ENCODE measurements at regions of chr17 and their contacts with region 1.

Region 1: DNA sequence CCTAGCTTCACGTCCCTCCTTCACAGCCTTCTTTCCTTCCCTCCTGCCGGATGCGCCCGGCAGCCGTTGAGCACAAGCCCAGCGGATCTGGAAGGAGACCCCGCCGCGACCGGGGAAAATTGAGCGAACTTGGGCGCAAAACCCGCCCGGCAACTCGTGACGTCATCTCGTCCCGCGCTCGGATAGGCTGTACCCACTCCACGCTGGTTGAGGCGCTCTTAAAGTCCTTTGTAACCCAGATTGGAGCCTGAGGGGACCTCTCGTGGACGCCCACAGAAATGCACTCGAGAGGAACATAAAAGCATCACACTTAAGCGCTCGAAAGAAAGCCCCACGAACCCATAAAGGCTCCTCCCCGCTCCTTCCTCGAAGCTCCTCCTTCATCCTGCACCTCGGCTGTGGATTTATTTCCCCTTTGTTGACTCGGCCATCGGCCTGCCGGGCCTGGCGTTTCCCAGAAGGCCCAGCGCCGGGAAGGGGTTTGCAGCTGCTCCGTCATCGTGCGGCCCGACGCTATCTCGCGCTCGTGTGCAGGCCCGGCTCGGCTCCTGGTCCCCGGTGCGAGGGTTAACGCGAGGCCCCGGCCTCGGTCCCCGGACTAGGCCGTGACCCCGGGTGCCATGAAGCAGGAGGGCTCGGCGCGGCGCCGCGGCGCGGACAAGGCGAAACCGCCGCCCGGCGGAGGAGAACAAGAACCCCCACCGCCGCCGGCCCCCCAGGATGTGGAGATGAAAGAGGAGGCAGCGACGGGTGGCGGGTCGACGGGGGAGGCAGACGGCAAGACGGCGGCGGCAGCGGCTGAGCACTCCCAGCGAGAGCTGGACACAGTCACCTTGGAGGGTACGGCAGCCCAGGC is at the start of gene PSMD3:
- DNase-seq: peak; percentile 95 to 100 (median 98)
- ATAC-seq: peak; percentile 94
- H3K4me3 ChIP-seq: peak within 1 kb of the TSS; percentile 96
- H3K4me3 Mint-ChIP-seq: peak within 1 kb of the TSS; percentile 89
- H3K27ac ChIP-seq: peak within 1 kb of the TSS; percentile 89 to 97
- H3K27ac Mint-ChIP-seq: peak within 1 kb of the TSS; percentile 95
- H3K4me1 ChIP-seq: peaks cover 25% of the 10 kb centered on the region
- H3K4me1 Mint-ChIP-seq: peaks cover 39% of the 10 kb centered on the region
- H3K27me3 ChIP-seq: no peaks in the 10 kb centered on the region
- H3K27me3 Mint-ChIP-seq: no peaks in the 10 kb centered on the region
- CTCF ChIP-seq: peak; percentile 70
- total RNA-seq, gene PSMD3: 66.7 to 71.9 TPM

Region 2: GRCh38 chr17:39636927-39637736 is 343.4 kb before region 1 on chr17 and contains the start of gene STARD3:
- CTCF ChIA-PET with region 1: no interaction called
- POLR2A ChIA-PET with region 1: no interaction called
- intact Hi-C with region 1: loop called in 1 of 2 experiments (anchors 2 kb)
- DNase-seq: peak; percentile 84 to 95 (median 88)
- ATAC-seq: peak; percentile 82
- H3K4me3 ChIP-seq: peak within 1 kb of the TSS; percentile 94
- H3K4me3 Mint-ChIP-seq: peak within 1 kb of the TSS; percentile 97
- H3K27ac ChIP-seq: peak within 1 kb of the TSS; percentile 92 to 94
- H3K27ac Mint-ChIP-seq: peak within 1 kb of the TSS; percentile 91
- H3K4me1 ChIP-seq: peaks cover 76% of the 10 kb centered on the region
- H3K4me1 Mint-ChIP-seq: peaks cover 68% of the 10 kb centered on the region
- H3K27me3 ChIP-seq: peaks cover 0 to 2% of the 10 kb centered on the region in 2 experiments
- H3K27me3 Mint-ChIP-seq: no peaks in the 10 kb centered on the region
- CTCF ChIP-seq: peak; percentile 43
- total RNA-seq, gene STARD3: 96.5 to 99.9 TPM

Region 3: DNA sequence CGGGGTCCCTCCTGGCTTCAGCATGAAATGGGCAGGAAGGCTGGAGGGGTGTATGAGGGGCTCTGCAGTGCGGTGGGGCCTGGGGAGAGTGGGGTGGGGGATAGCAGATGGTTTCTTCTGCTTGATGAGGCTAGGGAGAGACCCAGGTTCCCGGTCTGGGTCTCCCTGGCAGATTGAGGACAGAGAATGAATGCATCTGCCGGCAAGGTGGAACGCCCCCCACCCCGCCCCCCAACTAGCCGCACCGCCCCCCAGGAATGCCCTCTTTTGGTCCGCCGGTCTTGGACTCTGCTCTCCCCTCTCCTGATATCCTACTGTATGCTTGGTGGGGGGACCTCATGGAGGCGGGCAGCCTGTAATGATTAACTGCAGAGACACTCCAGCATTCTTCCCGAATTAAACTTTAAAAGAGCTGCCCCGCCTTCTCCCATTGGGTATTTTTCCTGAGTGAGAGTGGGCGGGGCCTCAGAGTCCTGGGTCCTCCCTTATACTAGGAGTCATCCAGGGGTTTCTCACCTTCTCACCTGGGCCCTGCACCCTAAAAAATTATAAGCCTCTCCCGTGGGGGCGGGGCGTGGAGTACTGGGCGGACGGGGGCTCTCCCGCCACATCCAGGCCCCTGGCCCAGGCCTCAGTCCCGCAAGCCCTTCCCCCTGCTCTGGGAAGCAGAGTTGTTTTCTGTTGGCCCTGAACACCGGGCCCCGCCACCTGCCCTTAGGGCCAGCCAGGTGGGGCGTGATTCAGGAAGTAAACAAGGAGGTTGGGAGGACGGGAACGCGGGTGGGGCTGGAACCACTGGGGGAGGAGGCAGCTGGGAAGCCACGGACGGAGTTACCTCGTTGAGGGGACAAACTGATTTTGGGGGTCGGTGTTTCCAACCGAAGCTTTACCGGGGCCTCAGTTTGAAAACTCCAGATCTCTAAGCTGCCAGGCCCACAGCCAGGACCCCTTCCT is 241.4 kb before region 1 on chr17:
- CTCF ChIA-PET with region 1: no interaction called
- POLR2A ChIA-PET with region 1: no interaction called
- intact Hi-C with region 1: no loop called
- DNase-seq: no peak
- ATAC-seq: no peak
- H3K4me3 ChIP-seq: no peak overlapping the region
- H3K4me3 Mint-ChIP-seq: peak overlapping the region; percentile 93
- H3K27ac ChIP-seq: no peak overlapping the region
- H3K27ac Mint-ChIP-seq: peak overlapping the region; percentile 68
- H3K4me1 ChIP-seq: peaks cover 24% of the 10 kb centered on the region
- H3K4me1 Mint-ChIP-seq: peaks cover 6% of the 10 kb centered on the region
- H3K27me3 ChIP-seq: peaks cover 10 to 22% of the 10 kb centered on the region in 2 experiments
- H3K27me3 Mint-ChIP-seq: peaks cover 20% of the 10 kb centered on the region
- CTCF ChIP-seq: no peak

Region 4: GRCh38 chr17:39872751-39873150 is 107.8 kb before region 1 on chr17:
- CTCF ChIA-PET with region 1: interaction called, 5 read pairs
- POLR2A ChIA-PET with region 1: interaction called, 11 read pairs
- intact Hi-C with region 1: loop called (anchors 1 to 2 kb)
- DNase-seq: peak in 2 of 14 experiments; percentile 39 to 52
- ATAC-seq: peak; percentile 57
- H3K4me3 ChIP-seq: no peak overlapping the region
- H3K4me3 Mint-ChIP-seq: no peak overlapping the region
- H3K27ac ChIP-seq: no peak overlapping the region
- H3K27ac Mint-ChIP-seq: no peak overlapping the region
- H3K4me1 ChIP-seq: peaks cover 10% of the 10 kb centered on the region
- H3K4me1 Mint-ChIP-seq: peaks cover 9% of the 10 kb centered on the region
- H3K27me3 ChIP-seq: no peaks in the 10 kb centered on the region
- H3K27me3 Mint-ChIP-seq: no peaks in the 10 kb centered on the region
- CTCF ChIP-seq: peak; percentile 47

Region 5: DNA sequence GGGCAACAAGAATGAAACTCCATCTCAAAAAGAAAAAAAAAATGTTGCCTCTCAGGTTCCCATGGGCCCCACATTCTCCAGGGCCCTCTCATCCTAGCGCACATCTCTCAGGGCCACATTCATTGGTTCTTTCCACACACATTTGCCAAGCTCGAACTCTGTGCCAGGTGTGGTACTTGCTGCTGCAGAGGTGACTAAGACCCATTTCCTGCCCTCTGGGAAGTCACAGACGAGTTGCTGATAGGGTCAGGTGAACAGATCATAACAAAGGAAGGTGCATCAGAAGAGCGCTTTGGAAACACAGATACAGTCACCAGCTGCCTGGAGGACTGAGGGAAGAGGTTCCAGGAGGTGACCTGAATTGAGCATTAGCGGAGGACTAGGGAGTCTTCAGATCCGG is 16.8 kb before region 1 on chr17:
- CTCF ChIA-PET with region 1: interaction called, 55 read pairs
- POLR2A ChIA-PET with region 1: interaction called, 25 read pairs
- intact Hi-C with region 1: loop called (anchors 1 kb)
- DNase-seq: peak in 13 of 14 experiments; percentile 16 to 68 (median 52)
- ATAC-seq: peak; percentile 71
- H3K4me3 ChIP-seq: no peak overlapping the region
- H3K4me3 Mint-ChIP-seq: no peak overlapping the region
- H3K27ac ChIP-seq: no peak overlapping the region
- H3K27ac Mint-ChIP-seq: peak overlapping the region; percentile 30
- H3K4me1 ChIP-seq: peaks cover 38% of the 10 kb centered on the region
- H3K4me1 Mint-ChIP-seq: peaks cover 37% of the 10 kb centered on the region
- H3K27me3 ChIP-seq: no peaks in the 10 kb centered on the region
- H3K27me3 Mint-ChIP-seq: no peaks in the 10 kb centered on the region
- CTCF ChIP-seq: no peak

Region 6: GRCh38 chr17:40086150-40087044 is 105.8 kb after region 1 on chr17:
- CTCF ChIA-PET with region 1: no interaction called
- POLR2A ChIA-PET with region 1: no interaction called
- intact Hi-C with region 1: no loop called
- DNase-seq: peak; percentile 46 to 78 (median 59)
- ATAC-seq: peak; percentile 68
- H3K4me3 ChIP-seq: no peak overlapping the region
- H3K4me3 Mint-ChIP-seq: no peak overlapping the region
- H3K27ac ChIP-seq: no peak overlapping the region
- H3K27ac Mint-ChIP-seq: no peak overlapping the region
- H3K4me1 ChIP-seq: peaks cover 9% of the 10 kb centered on the region
- H3K4me1 Mint-ChIP-seq: peaks cover 15% of the 10 kb centered on the region
- H3K27me3 ChIP-seq: no peaks in the 10 kb centered on the region
- H3K27me3 Mint-ChIP-seq: no peaks in the 10 kb centered on the region
- CTCF ChIP-seq: peak; percentile 89

Measured in CD4-positive, alpha-beta T cell (primary cell).